Posterior cingulate gyrus (tissue), 11 donors: ENCODE measurements at regions of chr11 and their contacts with region 1.

Region 1: GRCh38 chr11:75802913-75803820 is 11.8 kb upstream of the UVRAG start:
- DNase-seq: peak in 9 of 10 donors; percentile 38 to 93 (median 83)

Region 2: DNA sequence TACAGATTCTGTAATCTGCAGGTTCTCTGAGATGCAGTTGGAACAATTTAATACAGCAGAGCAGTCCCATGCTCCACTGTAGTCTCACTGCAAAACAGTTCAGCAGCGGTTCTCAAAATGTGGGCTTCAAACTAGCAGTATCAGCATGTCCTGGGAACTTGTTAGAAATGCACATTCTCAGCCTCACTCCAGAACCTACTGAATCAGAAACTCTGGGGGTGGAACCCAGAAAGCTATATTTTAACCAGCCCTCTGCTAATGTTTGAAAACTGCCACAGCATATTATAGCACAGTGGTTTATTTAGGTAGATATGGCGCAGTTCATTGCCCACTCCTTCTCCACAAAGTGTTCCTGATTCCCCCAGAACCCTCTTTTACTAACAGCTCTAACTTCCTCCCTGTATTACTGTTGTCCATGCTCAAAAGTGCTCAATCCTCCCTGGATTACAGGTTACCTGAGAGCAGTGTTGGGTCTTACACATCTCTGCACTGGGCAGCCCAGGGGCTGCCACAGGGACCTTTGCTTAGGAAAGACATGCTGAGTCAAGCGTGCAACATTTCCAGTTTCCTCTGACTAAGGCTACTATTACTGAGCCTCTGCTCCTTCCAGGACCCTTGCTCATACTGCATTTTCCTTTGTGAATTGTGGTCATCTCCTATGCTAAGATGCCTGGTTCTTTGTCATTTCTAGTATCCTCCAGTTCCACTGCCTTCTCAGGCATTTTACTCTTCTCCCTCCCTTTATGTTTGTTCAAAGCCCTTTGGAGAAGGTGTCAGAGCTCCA is 42.3 kb before region 1 on chr11:
- intact Hi-C with region 1: no loop called
- DNase-seq: peak in 1 of 10 donors; percentile 24

Region 3: DNA sequence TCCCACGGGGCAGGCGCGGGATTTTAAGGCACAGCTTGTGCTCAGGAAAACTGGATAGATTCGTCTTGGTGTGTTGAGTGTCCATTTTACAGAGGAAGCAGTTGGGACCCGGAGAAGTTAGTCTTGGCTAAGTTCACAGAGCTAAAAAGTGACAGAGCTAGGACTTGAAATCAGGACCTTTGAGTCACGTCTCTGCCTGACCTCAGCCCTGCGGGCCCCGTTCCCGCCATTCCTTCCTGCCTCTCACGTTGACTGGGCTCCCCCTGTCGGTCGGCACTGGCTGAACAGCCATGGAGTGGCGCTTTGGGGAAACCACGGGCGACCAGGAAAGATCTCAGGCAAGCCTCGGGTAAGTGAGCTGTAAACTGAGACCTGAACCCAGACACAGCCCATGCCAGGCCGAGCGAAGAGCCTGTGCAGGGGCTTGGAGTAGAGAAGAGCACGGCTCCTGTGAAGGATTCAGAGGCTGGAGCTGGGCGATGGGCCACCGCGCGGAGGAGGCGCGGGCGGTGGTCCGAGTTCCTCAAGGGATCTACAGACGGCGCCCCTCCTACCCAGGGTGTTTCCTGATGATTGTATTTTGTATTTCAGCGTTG is 349.0 kb after region 1 on chr11:
- intact Hi-C with region 1: loop called (anchors 2 kb)
- DNase-seq: peak; percentile 65 to 97 (median 87)